ENCODE measurements at regions of chr10 and their contacts with region 1.

Region 1: GRCh38 chr10:75235375-75236177 is at the start of gene COMTD1:
- DNase-seq: peak; percentile 97
- ATAC-seq: peak; percentile 71
- H3K4me3 Mint-ChIP-seq: peak within 1 kb of the TSS; percentile 83
- H3K27ac Mint-ChIP-seq: peak within 1 kb of the TSS; percentile 91
- H3K4me1 Mint-ChIP-seq: peaks cover 31% of the 10 kb centered on the region
- H3K27me3 Mint-ChIP-seq: no peaks in the 10 kb centered on the region
- total RNA-seq, gene COMTD1: 58.6 to 62.5 TPM

Region 2: GRCh38 chr10:74738985-74739567 is 496.5 kb before region 1 on chr10:
- CTCF ChIA-PET with region 1: interaction called, 10 read pairs
- POLR2A ChIA-PET with region 1: no interaction called
- DNase-seq: peak; percentile 84
- ATAC-seq: peak; percentile 88
- H3K4me3 Mint-ChIP-seq: peak overlapping the region; percentile 69
- H3K27ac Mint-ChIP-seq: peak overlapping the region; percentile 97
- H3K4me1 Mint-ChIP-seq: peaks cover 34% of the 10 kb centered on the region
- H3K27me3 Mint-ChIP-seq: no peaks in the 10 kb centered on the region

Region 3: GRCh38 chr10:75099952-75100763 is 135.4 kb before region 1 on chr10:
- CTCF ChIA-PET with region 1: interaction called, 12 read pairs
- POLR2A ChIA-PET with region 1: interaction called, 3 read pairs
- DNase-seq: peak; percentile 85
- ATAC-seq: peak; percentile 89
- H3K4me3 Mint-ChIP-seq: no peak overlapping the region
- H3K27ac Mint-ChIP-seq: no peak overlapping the region
- H3K4me1 Mint-ChIP-seq: peaks cover 7% of the 10 kb centered on the region
- H3K27me3 Mint-ChIP-seq: no peaks in the 10 kb centered on the region

Region 4: DNA sequence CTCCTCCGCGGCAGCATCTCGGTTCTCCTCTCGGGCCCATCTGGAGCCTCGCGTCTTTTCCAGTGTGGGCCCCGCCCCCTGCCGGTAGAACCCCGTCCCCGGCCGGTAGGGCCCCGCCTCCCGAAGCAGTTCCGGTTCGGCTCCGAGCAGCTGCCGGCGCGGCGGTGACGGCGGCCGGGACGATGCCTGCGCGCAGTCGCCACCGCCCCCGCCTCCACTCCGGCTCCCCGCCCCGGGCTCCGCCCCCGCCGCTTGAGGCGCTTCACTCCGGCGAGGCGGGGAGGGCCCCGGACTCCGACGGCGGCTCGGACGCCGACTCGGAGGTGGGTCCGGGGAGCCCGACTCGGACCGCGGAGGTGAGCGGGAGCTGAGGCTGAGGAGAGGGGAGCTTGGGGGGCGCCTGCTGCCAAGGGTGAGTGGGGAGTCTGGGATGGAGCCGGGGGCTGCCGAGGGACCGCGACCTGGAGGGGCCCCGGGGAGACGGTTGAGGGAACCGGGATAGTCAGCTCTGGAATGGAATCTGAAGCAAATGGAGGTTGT is 124.1 kb before region 1 on chr10 and contains the start of gene SAMD8:
- CTCF ChIA-PET with region 1: interaction called, 61 read pairs
- POLR2A ChIA-PET with region 1: interaction called, 13 read pairs
- DNase-seq: peak; percentile 98
- ATAC-seq: peak; percentile 90
- H3K4me3 Mint-ChIP-seq: peak within 1 kb of the TSS; percentile 80
- H3K27ac Mint-ChIP-seq: peak within 1 kb of the TSS; percentile 88
- H3K4me1 Mint-ChIP-seq: peaks cover 48% of the 10 kb centered on the region
- H3K27me3 Mint-ChIP-seq: no peaks in the 10 kb centered on the region
- total RNA-seq, gene SAMD8: 17.4 to 18.2 TPM

Region 5: DNA sequence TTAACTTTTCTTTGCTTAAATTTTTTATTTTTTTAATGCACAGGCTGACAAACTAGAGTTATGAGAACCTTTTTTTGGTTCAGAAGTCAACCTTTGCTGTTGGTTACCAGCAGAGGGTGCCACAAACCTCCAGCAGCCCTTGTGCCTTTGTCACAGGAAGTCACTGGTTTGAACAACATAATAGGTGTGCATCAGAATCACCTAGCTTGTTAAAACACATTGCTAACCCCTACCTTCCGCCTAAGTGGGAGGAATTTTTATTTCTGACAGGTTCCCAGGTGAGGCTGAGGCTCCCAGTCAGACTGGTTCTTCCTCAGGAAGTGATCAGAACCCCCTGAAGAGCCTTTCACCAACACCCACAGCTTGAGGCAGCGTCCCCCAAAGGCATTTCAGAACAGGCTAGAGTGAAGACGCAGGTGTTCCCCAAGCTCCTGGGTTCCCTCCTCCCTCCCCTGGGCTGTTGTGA is 47.6 kb before region 1 on chr10:
- CTCF ChIA-PET with region 1: interaction called, 279 read pairs
- POLR2A ChIA-PET with region 1: interaction called, 7 read pairs
- DNase-seq: peak; percentile 85
- ATAC-seq: peak; percentile 92
- H3K4me3 Mint-ChIP-seq: no peak overlapping the region
- H3K27ac Mint-ChIP-seq: peak overlapping the region; percentile 93
- H3K4me1 Mint-ChIP-seq: peaks cover 19% of the 10 kb centered on the region
- H3K27me3 Mint-ChIP-seq: no peaks in the 10 kb centered on the region

Region 6: GRCh38 chr10:75202321-75203045 is 33.1 kb before region 1 on chr10:
- CTCF ChIA-PET with region 1: interaction called, 11 read pairs
- POLR2A ChIA-PET with region 1: interaction called, 4 read pairs
- DNase-seq: no peak
- ATAC-seq: no peak
- H3K4me3 Mint-ChIP-seq: no peak overlapping the region
- H3K27ac Mint-ChIP-seq: no peak overlapping the region
- H3K4me1 Mint-ChIP-seq: peaks cover 11% of the 10 kb centered on the region
- H3K27me3 Mint-ChIP-seq: no peaks in the 10 kb centered on the region

Region 7: GRCh38 chr10:75210282-75211006 is 25.1 kb before region 1 on chr10 and contains the start of gene VDAC2:
- CTCF ChIA-PET with region 1: interaction called, 37 read pairs
- POLR2A ChIA-PET with region 1: interaction called, 61 read pairs
- DNase-seq: peak; percentile 94
- ATAC-seq: peak; percentile 85
- H3K4me3 Mint-ChIP-seq: peak within 1 kb of the TSS; percentile 98
- H3K27ac Mint-ChIP-seq: peak within 1 kb of the TSS; percentile 100
- H3K4me1 Mint-ChIP-seq: peaks cover 35% of the 10 kb centered on the region
- H3K27me3 Mint-ChIP-seq: no peaks in the 10 kb centered on the region
- total RNA-seq, gene VDAC2: 152 to 159 TPM